ENCODE measurements at regions of chr12 and their contacts with region 1.

Region 1: DNA sequence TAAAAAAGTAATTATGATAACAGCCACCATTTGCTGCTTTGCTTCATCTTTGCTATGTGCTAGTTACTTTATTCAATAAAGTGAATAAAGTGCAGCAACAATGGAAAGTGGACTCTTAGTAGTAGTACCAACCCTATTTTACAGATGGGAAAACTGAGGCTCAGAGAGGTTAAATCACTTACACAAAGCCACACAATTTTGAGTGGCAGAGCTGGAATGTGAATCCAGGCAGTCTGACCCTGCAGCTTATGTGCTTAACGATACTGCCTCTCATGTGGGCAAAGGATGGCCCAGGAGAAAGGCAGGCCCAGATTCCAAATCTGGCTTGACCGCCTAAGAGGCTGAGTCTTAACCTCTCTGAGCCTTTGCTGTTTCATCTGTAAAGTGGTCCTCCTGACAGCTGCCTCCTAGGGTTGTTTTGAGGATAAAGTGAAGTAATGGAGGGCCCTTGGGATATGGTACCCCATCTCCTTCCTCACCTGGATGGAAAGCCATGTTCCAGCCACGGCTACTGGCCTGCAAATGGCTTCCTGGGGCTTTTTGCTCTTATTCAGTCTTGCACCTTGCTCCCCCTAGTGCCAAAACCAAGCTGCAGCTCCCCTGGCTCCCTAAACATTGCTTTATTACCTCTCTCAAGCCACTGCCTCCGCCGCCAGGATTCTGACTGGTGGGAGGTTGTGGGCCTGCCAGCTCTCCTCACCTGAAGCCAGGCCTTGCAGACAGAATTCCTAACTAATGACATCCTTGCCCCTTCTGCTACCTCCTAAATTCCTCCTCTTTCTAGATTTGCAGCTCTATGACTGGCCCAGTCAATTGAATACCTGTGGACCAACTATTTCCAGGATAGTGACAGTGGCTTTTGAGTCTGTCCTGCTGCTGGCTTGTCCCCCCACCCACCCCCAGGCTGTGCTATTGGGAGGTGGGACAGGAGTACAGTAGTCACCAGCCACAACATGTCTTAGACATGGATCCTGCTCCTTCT is 283.3 kb upstream of the PWP1 start:
- DNase-seq: peak; percentile 82
- H3K4me3 ChIP-seq: no peak overlapping the region
- H3K27ac ChIP-seq: no peak overlapping the region
- H3K4me1 ChIP-seq: peaks cover 13% of the 10 kb centered on the region
- H3K27me3 ChIP-seq: no peaks in the 10 kb centered on the region
- CTCF ChIP-seq: peak; percentile 85

Region 2: DNA sequence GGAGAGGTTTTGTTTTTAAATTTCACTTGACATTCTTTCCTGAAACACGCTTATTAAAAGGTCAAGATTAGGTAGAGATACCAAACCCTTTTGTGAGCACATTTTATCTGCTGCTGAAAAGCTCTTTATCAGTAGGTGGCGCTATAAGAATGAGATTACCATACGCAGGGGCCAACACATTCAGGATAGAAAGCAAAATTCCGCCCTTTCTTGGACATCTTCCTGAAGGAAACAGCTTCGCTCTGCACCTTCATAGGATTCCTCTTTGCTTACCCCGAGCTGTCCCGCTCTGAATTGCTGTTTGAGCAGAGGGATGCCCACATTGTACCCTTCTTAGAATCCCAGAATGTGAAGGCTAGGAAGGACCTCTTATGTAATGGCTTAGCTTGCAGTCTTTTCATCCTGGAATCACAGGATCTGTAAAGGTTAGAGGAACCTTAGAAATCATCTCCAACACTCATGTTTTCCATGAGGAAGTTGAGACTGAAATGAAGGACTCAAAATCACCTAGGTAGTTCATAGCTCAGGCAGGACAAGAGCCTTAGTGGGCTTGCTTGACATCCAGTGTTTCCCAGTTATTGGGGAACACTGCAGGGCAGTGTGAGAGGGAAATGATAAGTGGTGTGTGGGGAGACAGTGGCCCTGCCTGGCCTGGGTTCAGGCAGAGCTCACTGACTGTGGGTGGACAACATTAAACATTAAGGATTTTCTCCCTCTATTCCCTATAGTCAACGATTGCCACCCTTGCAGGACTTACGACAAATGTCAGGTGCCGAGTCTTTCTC is 270.3 kb before region 1 on chr12:
- CTCF ChIA-PET with region 1: interaction called, 16 read pairs
- POLR2A ChIA-PET with region 1: no interaction called
- intact Hi-C with region 1: loop called (anchors 1 kb)
- DNase-seq: peak; percentile 76
- H3K4me3 ChIP-seq: no peak overlapping the region
- H3K27ac ChIP-seq: no peak overlapping the region
- H3K4me1 ChIP-seq: no peaks in the 10 kb centered on the region
- H3K27me3 ChIP-seq: no peaks in the 10 kb centered on the region
- CTCF ChIP-seq: peak; percentile 90

Region 3: GRCh38 chr12:107145397-107145796 is 256.9 kb before region 1 on chr12:
- CTCF ChIA-PET with region 1: interaction called, 10 read pairs
- POLR2A ChIA-PET with region 1: no interaction called
- intact Hi-C with region 1: no loop called
- DNase-seq: no peak
- H3K4me3 ChIP-seq: no peak overlapping the region
- H3K27ac ChIP-seq: no peak overlapping the region
- H3K4me1 ChIP-seq: no peaks in the 10 kb centered on the region
- H3K27me3 ChIP-seq: no peaks in the 10 kb centered on the region
- CTCF ChIP-seq: no peak

Region 4: DNA sequence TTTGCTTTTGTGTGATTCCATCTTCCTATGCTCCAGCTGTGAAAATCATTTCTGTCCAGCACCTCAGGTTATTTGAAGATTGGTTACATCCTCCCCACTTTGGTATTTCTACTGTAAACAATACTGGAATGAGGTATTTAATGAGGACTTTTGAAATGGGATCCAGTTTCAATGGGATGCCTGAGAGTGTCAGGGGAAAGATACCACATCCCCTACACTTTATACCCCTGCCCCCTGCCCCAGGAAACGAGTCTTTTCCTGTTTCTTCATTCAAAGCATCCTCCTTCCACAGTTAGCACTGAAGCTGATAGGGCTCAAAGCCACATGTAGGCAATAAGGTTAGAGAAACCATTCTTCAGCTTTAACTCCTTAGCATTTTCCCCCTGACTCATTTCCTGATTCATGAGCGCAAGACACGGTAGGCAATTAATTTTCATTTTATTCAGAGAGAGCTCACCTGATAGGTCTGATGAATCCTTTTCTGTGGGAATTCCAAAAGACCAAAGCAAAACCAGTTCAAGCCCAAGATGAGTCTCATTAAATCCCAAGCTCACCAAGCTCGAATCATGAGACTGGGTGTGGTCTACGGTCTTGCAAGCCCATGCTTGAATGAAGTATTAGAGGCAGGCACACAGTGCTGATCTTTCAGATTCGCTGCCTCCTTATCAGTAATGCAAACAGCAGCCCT is 165.4 kb before region 1 on chr12:
- CTCF ChIA-PET with region 1: no interaction called
- POLR2A ChIA-PET with region 1: no interaction called
- intact Hi-C with region 1: loop called (anchors 10 kb)
- DNase-seq: peak; percentile 95
- H3K4me3 ChIP-seq: no peak overlapping the region
- H3K27ac ChIP-seq: peak overlapping the region; percentile 29
- H3K4me1 ChIP-seq: peaks cover 38% of the 10 kb centered on the region
- H3K27me3 ChIP-seq: no peaks in the 10 kb centered on the region
- CTCF ChIP-seq: no peak

Region 5: DNA sequence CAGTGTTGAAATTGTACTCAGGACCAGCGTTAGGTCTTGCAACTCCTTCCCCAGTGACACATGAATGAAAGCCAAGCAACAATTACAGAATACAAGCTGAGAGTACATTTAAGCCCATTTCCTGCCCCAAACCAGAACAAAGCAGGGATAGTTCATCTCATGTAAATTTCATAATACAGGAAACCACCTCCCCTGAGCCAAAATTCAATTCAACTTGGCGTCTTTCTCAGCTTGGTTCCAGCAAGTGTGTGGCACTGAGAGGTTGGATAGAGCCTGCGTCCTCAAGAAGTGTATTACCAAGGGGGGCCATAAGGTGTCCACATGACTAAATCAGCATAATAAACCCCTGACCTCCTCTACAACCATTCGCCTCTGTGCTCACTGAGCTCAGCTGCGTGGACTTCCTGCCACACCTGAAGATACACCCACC is 30.1 kb before region 1 on chr12:
- CTCF ChIA-PET with region 1: interaction called, 11 read pairs
- POLR2A ChIA-PET with region 1: no interaction called
- intact Hi-C with region 1: no loop called
- DNase-seq: peak; percentile 97
- H3K4me3 ChIP-seq: no peak overlapping the region
- H3K27ac ChIP-seq: no peak overlapping the region
- H3K4me1 ChIP-seq: peaks cover 56% of the 10 kb centered on the region
- H3K27me3 ChIP-seq: no peaks in the 10 kb centered on the region
- CTCF ChIP-seq: peak; percentile 32

Region 6: GRCh38 chr12:107385509-107385908 is 16.8 kb before region 1 on chr12:
- CTCF ChIA-PET with region 1: no interaction called
- POLR2A ChIA-PET with region 1: no interaction called
- intact Hi-C with region 1: no loop called
- DNase-seq: no peak
- H3K4me3 ChIP-seq: no peak overlapping the region
- H3K27ac ChIP-seq: no peak overlapping the region
- H3K4me1 ChIP-seq: peaks cover 17% of the 10 kb centered on the region
- H3K27me3 ChIP-seq: no peaks in the 10 kb centered on the region
- CTCF ChIP-seq: no peak

Region 7: DNA sequence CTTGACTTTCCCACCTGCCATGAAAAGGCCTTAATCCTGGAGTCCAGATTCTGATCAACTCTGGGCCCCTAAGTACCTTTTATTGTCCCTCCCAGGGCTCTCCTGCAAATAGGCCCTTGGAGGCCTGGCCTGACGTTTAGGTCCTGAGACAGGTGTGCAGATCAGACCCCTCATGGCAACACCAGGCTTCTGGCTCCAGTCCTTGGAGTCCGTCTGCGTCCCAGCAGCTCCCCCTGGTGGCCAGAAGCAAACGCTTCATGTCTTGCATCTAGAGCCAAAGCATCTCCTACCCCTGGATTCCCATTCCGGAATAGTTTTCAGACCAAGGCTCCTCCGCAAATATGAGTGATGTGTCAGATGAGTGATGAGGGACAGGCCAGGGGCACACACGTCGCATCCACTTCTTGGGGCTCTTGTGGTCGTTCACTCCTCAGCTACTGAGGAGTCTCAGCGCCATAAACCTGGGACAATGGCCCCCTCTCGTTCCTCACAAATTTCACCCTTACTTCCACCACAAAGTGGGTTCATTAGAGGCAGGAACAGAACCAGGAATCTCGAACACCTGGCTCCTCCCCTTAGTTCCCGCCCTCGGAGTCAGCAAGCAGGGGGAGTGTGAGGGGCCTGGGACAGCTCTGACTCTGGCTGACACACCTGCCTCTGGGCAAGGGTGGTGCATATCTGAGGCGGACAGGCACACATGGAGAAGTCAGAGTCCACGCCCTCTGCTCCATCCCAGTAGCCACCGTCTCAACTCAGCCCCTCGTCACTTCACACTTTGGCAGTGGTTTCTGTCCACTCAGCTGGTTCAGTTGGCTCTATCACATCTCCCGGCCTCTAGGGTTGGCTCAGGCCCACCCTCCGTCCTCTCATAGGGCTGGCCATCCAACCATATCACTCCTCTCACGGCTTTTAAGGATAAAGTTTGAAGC is 205.4 kb after region 1 on chr12:
- CTCF ChIA-PET with region 1: no interaction called
- POLR2A ChIA-PET with region 1: no interaction called
- intact Hi-C with region 1: loop called (anchors 2 kb)
- DNase-seq: peak; percentile 85
- H3K4me3 ChIP-seq: no peak overlapping the region
- H3K27ac ChIP-seq: no peak overlapping the region
- H3K4me1 ChIP-seq: no peaks in the 10 kb centered on the region
- H3K27me3 ChIP-seq: no peaks in the 10 kb centered on the region
- CTCF ChIP-seq: peak; percentile 92

Measured in A673 (cell line).